B cell (primary cell): ENCODE measurements at regions of chr12 and their contacts with region 1.

Region 1: DNA sequence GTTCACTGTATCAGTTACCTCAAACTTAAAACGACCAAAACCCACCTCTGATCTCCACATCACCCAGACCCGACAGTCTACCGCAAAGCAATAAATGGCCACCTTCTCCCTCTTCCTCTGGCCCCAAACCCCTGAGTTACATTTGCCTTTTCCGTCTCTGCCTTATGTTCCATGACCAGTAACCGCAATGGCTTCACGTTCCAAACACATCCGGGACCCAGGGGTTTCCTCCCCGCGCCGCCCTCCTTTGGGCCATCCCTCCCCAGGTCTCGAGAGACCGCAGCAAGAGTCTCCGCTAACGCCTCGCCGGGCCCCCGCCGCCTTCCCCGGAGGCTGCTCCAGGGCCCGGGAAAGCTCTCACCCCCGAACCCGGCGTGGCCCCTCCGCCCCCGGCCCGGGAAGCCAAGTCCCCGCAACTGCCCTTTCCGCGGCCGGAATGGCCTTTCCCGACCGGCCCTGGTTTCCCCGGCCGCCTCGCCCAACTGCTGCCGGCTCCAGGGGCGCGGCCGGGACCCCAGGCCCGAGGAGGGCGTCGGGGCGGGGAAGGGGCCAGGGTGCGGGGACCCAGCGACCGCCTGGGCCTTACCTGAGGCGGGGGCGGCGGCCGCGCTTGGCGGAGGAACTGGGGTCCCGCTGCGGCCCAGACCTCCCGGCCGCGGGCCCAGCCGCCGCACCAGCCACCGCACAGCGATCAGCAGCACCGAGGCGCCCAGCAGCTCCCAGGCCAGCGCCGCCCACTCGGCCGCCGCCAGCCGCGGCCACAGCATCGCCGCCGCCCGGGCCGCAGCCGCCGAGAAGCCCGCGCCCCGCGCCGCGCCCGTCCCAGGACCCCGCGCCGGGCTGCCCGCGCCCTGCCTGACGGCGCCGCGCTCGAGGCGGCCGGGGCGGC is at the start of gene ANKLE2:
- DNase-seq: peak; percentile 67
- ATAC-seq: peak; percentile 58
- H3K4me3 ChIP-seq: peak within 1 kb of the TSS; percentile 71 to 96 (median 80)
- H3K4me3 Mint-ChIP-seq: peak within 1 kb of the TSS; percentile 93
- H3K27ac ChIP-seq: peak within 1 kb of the TSS; percentile 89 to 91
- H3K27ac Mint-ChIP-seq: peak within 1 kb of the TSS; percentile 94
- H3K4me1 ChIP-seq: peaks cover 22 to 34% of the 10 kb centered on the region in 2 donors
- H3K4me1 Mint-ChIP-seq: peaks cover 49% of the 10 kb centered on the region
- H3K27me3 ChIP-seq: no peaks in the 10 kb centered on the region
- H3K27me3 Mint-ChIP-seq: no peaks in the 10 kb centered on the region
- CTCF ChIP-seq: no peak
- total RNA-seq, gene ANKLE2: 148 and 158 TPM in 2 replicates

Region 2: DNA sequence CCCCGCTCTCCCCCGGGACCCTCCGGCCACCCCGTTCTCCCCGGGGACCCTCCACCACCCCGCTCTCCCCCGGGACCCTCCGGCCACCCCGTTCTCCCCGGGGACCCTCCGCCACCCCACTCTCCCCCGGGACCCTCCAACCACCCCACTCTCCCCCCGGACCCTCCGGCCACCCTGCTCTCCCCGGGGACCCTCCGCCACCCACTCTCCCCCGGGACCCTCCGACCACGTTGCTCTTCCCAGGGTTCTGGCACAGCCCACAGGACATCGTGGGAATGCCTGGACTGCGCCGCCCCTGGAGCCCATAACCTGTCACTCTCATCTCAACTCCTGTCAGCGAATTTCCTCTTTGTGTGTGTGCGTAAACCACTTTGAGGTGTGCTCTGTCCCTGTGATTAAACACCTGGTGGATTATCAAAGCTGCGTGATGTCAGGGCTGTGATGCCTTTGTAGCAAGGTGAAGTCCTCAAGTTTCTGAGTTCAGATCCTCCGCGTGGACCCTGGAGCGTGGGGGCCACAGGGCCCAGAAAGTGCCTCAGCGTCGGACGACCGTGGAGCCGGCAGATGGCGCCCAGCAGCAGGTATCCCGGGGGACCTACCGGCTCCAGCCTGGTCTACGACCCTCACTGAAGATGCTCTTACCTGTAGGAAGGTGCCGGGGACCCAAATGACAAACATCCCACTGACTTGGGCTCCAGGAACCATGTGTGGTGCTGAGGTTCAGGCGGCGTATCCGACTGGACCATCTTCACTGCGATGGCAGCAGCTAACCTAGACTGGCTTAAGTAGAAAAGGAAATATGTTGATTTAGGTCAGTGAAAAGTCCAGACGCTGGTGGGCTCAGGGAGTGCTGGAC is 368.7 kb before region 1 on chr12:
- CTCF ChIA-PET with region 1: no interaction called
- POLR2A ChIA-PET with region 1: no interaction called
- intact Hi-C with region 1: no loop called
- DNase-seq: no peak
- ATAC-seq: no peak
- H3K4me3 ChIP-seq: no peak overlapping the region
- H3K4me3 Mint-ChIP-seq: no peak overlapping the region
- H3K27ac ChIP-seq: no peak overlapping the region
- H3K27ac Mint-ChIP-seq: no peak overlapping the region
- H3K4me1 ChIP-seq: no peaks in the 10 kb centered on the region
- H3K4me1 Mint-ChIP-seq: no peaks in the 10 kb centered on the region
- H3K27me3 ChIP-seq: peaks cover 0 to 8% (median 1%) of the 10 kb centered on the region in 4 experiments
- H3K27me3 Mint-ChIP-seq: peaks cover 9% of the 10 kb centered on the region
- CTCF ChIP-seq: no peak

Region 3: GRCh38 chr12:132687208-132688164 is 73.8 kb before region 1 on chr12 and contains the starts of genes POLE and PXMP2:
- CTCF ChIA-PET with region 1: no interaction called
- POLR2A ChIA-PET with region 1: no interaction called
- intact Hi-C with region 1: loop called (anchors 2 kb)
- DNase-seq: peak; percentile 96
- ATAC-seq: peak; percentile 94
- H3K4me3 ChIP-seq: peak within 1 kb of the TSS in 4 of 5 experiments; percentile 29 to 64 (median 60)
- H3K4me3 Mint-ChIP-seq: peak within 1 kb of the TSS; percentile 87
- H3K27ac ChIP-seq: peak within 1 kb of the TSS in 1 of 2 donors; percentile 56
- H3K27ac Mint-ChIP-seq: peak within 1 kb of the TSS; percentile 71
- H3K4me1 ChIP-seq: peaks cover 8 to 12% of the 10 kb centered on the region in 2 donors
- H3K4me1 Mint-ChIP-seq: peaks cover 20% of the 10 kb centered on the region
- H3K27me3 ChIP-seq: no peaks in the 10 kb centered on the region
- H3K27me3 Mint-ChIP-seq: no peaks in the 10 kb centered on the region
- CTCF ChIP-seq: no peak
- total RNA-seq, gene POLE: 62.0 and 69.1 TPM in 2 replicates
- total RNA-seq, gene PXMP2: 6.7 and 10.2 TPM in 2 replicates

Region 4: GRCh38 chr12:132710422-132711168 is 50.7 kb before region 1 on chr12 and contains the start of gene PGAM5:
- CTCF ChIA-PET with region 1: no interaction called
- POLR2A ChIA-PET with region 1: interaction called, 3 read pairs
- intact Hi-C with region 1: loop called (anchors 1 kb)
- DNase-seq: peak; percentile 98
- ATAC-seq: peak; percentile 96
- H3K4me3 ChIP-seq: peak within 1 kb of the TSS; percentile 61 to 91 (median 79)
- H3K4me3 Mint-ChIP-seq: peak within 1 kb of the TSS; percentile 92
- H3K27ac ChIP-seq: peak within 1 kb of the TSS; percentile 95 to 97
- H3K27ac Mint-ChIP-seq: peak within 1 kb of the TSS; percentile 90
- H3K4me1 ChIP-seq: peaks cover 10 to 23% of the 10 kb centered on the region in 2 donors
- H3K4me1 Mint-ChIP-seq: peaks cover 13% of the 10 kb centered on the region
- H3K27me3 ChIP-seq: no peaks in the 10 kb centered on the region
- H3K27me3 Mint-ChIP-seq: no peaks in the 10 kb centered on the region
- CTCF ChIP-seq: no peak
- total RNA-seq, gene PGAM5: 28.3 and 29.9 TPM in 2 replicates

Region 5: GRCh38 chr12:132771126-132771838 is 10.0 kb after region 1 on chr12:
- CTCF ChIA-PET with region 1: interaction called, 8 read pairs
- POLR2A ChIA-PET with region 1: interaction called, 17 read pairs
- intact Hi-C with region 1: loop called (anchors 1 kb)
- DNase-seq: peak; percentile 87
- ATAC-seq: peak; percentile 56
- H3K4me3 ChIP-seq: peak overlapping the region in 4 of 5 experiments; percentile 7 to 31 (median 16)
- H3K4me3 Mint-ChIP-seq: peak overlapping the region; percentile 69
- H3K27ac ChIP-seq: peak overlapping the region; percentile 87 to 89
- H3K27ac Mint-ChIP-seq: peak overlapping the region; percentile 88
- H3K4me1 ChIP-seq: peaks cover 60 to 76% of the 10 kb centered on the region in 2 donors
- H3K4me1 Mint-ChIP-seq: peaks cover 61% of the 10 kb centered on the region
- H3K27me3 ChIP-seq: no peaks in the 10 kb centered on the region
- H3K27me3 Mint-ChIP-seq: no peaks in the 10 kb centered on the region
- CTCF ChIP-seq: no peak

Region 6: GRCh38 chr12:133264173-133264572 is 502.9 kb after region 1 on chr12:
- CTCF ChIA-PET with region 1: no interaction called
- POLR2A ChIA-PET with region 1: no interaction called
- intact Hi-C with region 1: no loop called
- DNase-seq: no peak
- ATAC-seq: no peak
- H3K4me3 ChIP-seq: no peak overlapping the region
- H3K4me3 Mint-ChIP-seq: no peak overlapping the region
- H3K27ac ChIP-seq: no peak overlapping the region
- H3K27ac Mint-ChIP-seq: no peak overlapping the region
- H3K4me1 ChIP-seq: no peaks in the 10 kb centered on the region
- H3K4me1 Mint-ChIP-seq: no peaks in the 10 kb centered on the region
- H3K27me3 ChIP-seq: no peaks in the 10 kb centered on the region
- H3K27me3 Mint-ChIP-seq: no peaks in the 10 kb centered on the region
- CTCF ChIP-seq: no peak